CD4-positive, alpha-beta memory T cell (primary cell): ENCODE measurements at regions of chr9 and their contacts with region 1.

Region 1: GRCh38 chr9:92764988-92765936 is 629 bp upstream of the BICD2 start:
- DNase-seq: peak; percentile 97 to 99 (median 99)
- H3K4me3 ChIP-seq: peak overlapping the region; percentile 2 to 80
- H3K4me3 Mint-ChIP-seq: peak overlapping the region; percentile 89 to 95 (median 90)
- H3K27ac ChIP-seq: peak overlapping the region; percentile 95
- H3K27ac Mint-ChIP-seq: peak overlapping the region; percentile 94 to 98 (median 96)
- H3K4me1 ChIP-seq: peaks cover 54% of the 10 kb centered on the region
- H3K4me1 Mint-ChIP-seq: peaks cover 43 to 66% (median 49%) of the 10 kb centered on the region in 4 donors
- H3K27me3 ChIP-seq: no peaks in the 10 kb centered on the region
- H3K27me3 Mint-ChIP-seq: no peaks in the 10 kb centered on the region

Region 2: GRCh38 chr9:92293452-92294296 is 471.6 kb before region 1 on chr9 and contains the start of gene IARS1:
- CTCF ChIA-PET with region 1: no interaction called
- POLR2A ChIA-PET with region 1: no interaction called
- intact Hi-C with region 1: loop called (anchors 10 kb)
- DNase-seq: peak; percentile 98 to 100 (median 99)
- H3K4me3 ChIP-seq: peak within 1 kb of the TSS; percentile 66 to 77
- H3K4me3 Mint-ChIP-seq: peak within 1 kb of the TSS; percentile 97 to 100 (median 98)
- H3K27ac ChIP-seq: peak within 1 kb of the TSS; percentile 66
- H3K27ac Mint-ChIP-seq: peak within 1 kb of the TSS; percentile 98 to 99 (median 99)
- H3K4me1 ChIP-seq: peaks cover 49% of the 10 kb centered on the region
- H3K4me1 Mint-ChIP-seq: peaks cover 33 to 84% (median 61%) of the 10 kb centered on the region in 4 donors
- H3K27me3 ChIP-seq: no peaks in the 10 kb centered on the region
- H3K27me3 Mint-ChIP-seq: no peaks in the 10 kb centered on the region
- total RNA-seq, gene IARS1: 109 to 112 TPM

Region 3: GRCh38 chr9:92669890-92670708 is 95.2 kb before region 1 on chr9 and contains the start of gene IPPK:
- CTCF ChIA-PET with region 1: interaction called, 8 read pairs
- POLR2A ChIA-PET with region 1: interaction called, 36 read pairs
- intact Hi-C with region 1: loop called (anchors 1 kb)
- DNase-seq: peak; percentile 95 to 98 (median 97)
- H3K4me3 ChIP-seq: peak within 1 kb of the TSS; percentile 89 to 90
- H3K4me3 Mint-ChIP-seq: peak within 1 kb of the TSS; percentile 94 to 99 (median 96)
- H3K27ac ChIP-seq: peak within 1 kb of the TSS; percentile 97
- H3K27ac Mint-ChIP-seq: peak within 1 kb of the TSS; percentile 97 to 99 (median 98)
- H3K4me1 ChIP-seq: peaks cover 29% of the 10 kb centered on the region
- H3K4me1 Mint-ChIP-seq: peaks cover 24 to 45% (median 35%) of the 10 kb centered on the region in 4 donors
- H3K27me3 ChIP-seq: no peaks in the 10 kb centered on the region
- H3K27me3 Mint-ChIP-seq: no peaks in the 10 kb centered on the region
- total RNA-seq, gene IPPK: 7.2 to 7.9 TPM

Region 4: DNA sequence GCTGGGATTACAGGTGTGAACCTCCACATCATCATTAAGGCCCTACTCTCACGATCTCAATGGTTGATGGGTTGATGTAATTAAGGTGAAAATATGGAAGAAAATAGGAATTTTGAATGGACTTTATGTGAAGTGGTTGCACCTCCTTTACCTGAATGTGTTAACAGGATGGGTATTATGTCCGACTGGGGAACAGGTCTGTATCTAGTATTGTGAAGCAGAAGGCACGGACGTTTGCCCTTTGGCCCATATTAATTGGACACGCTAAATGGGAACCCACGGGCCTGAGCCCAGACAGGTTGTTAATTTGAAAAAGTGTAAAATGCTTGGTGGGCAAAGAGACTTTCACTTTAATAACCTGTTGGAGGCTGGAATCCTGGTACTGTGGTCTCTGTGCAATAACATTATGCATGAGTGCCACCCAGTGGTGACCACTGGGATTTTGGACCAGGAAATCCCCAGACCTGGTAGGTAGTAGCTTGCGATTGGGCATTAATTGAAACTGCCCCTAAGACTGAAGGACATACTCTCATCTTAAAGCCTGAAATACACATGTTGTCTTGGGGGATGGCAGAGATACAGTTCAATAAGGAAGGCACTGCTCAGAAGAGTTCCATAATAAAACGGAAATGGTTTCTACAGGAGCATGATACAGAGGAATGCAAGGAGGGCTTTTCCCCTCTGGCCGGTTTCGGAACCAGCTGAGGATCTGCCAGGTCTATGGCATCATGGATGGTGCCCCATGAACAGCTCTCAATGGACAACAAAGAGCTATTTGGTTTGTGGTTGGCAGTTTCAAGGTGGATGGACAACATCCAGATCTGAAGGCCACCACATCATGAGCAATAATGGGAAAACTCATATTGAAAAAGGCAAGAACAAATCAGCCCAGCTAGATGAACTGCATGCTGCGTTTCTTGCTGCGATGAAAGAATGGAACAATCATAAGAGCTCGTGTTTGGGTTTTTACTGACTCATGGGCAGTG is 25.6 kb after region 1 on chr9:
- CTCF ChIA-PET with region 1: interaction called, 23 read pairs
- POLR2A ChIA-PET with region 1: interaction called, 3 read pairs
- intact Hi-C with region 1: loop called (anchors 1 kb)
- DNase-seq: peak; percentile 69 to 75 (median 72)
- H3K4me3 ChIP-seq: no peak overlapping the region
- H3K4me3 Mint-ChIP-seq: peak overlapping the region in 2 of 8 donors; percentile 35 to 40
- H3K27ac ChIP-seq: no peak overlapping the region
- H3K27ac Mint-ChIP-seq: peak overlapping the region in 4 of 7 donors; percentile 1 to 77 (median 48)
- H3K4me1 ChIP-seq: no peaks in the 10 kb centered on the region
- H3K4me1 Mint-ChIP-seq: peaks cover 3 to 9% (median 5%) of the 10 kb centered on the region in 4 donors
- H3K27me3 ChIP-seq: no peaks in the 10 kb centered on the region
- H3K27me3 Mint-ChIP-seq: peaks cover 4 to 5% of the 10 kb centered on the region in 2 donors

Region 5: DNA sequence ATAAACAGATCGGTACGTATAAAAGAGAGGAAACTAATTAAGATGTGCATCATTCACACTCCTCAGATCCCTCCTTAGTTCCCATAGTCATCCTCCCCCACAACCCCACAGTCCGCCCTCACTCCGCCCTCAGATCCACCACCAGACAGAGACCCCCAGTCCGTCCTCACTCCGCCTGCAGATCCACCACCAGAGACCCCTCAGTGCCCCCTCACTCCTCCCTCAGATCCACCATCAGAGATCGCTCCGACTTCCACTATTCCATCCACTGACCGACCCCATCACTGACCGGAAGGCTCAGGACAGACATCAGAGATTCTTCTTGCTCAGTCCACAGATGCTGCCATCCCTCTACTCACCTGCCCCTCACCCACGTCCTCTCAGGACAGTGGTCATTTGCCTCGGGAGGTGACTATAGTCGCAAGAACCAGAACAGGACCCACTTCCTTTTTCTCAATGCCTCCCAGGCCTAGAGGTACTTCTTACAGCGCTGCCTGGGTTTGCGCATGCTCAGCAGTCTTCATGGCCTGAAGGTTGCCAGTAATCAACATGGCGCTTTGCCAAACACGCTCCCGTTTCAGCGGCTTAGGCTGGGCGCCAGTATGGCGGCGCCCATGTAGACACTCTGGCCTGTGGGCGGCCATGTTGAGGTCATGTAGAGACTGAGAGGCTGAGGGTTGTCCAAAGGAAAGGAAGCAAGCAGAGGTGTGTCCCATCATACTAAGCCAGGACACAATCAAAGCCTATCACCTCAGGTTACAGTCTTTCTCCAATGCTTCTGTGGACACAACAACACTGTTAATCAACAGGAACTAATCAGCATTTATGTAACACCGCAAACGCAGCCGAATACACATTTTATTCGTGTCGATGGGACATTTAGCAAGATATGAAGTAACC is 112.5 kb after region 1 on chr9 and contains the start of gene ZNF484:
- CTCF ChIA-PET with region 1: no interaction called
- POLR2A ChIA-PET with region 1: no interaction called
- intact Hi-C with region 1: loop called (anchors 1 kb)
- DNase-seq: peak; percentile 94 to 97 (median 95)
- H3K4me3 ChIP-seq: peak within 1 kb of the TSS; percentile 81 to 97
- H3K4me3 Mint-ChIP-seq: peak within 1 kb of the TSS; percentile 87 to 100 (median 99)
- H3K27ac ChIP-seq: peak within 1 kb of the TSS; percentile 94
- H3K27ac Mint-ChIP-seq: peak within 1 kb of the TSS; percentile 96 to 100 (median 99)
- H3K4me1 ChIP-seq: peaks cover 35% of the 10 kb centered on the region
- H3K4me1 Mint-ChIP-seq: peaks cover 30 to 48% (median 40%) of the 10 kb centered on the region in 4 donors
- H3K27me3 ChIP-seq: no peaks in the 10 kb centered on the region
- H3K27me3 Mint-ChIP-seq: no peaks in the 10 kb centered on the region
- total RNA-seq, gene ZNF484: 22.6 to 24.7 TPM

Region 6: GRCh38 chr9:92947268-92948047 is 182.2 kb after region 1 on chr9 and contains the start of gene FGD3:
- CTCF ChIA-PET with region 1: no interaction called
- POLR2A ChIA-PET with region 1: no interaction called
- intact Hi-C with region 1: no loop called
- DNase-seq: peak; percentile 40 to 54 (median 49)
- H3K4me3 ChIP-seq: peak within 1 kb of the TSS; percentile 60 to 64
- H3K4me3 Mint-ChIP-seq: peak within 1 kb of the TSS; percentile 97 to 99 (median 98)
- H3K27ac ChIP-seq: peak within 1 kb of the TSS; percentile 57
- H3K27ac Mint-ChIP-seq: peak within 1 kb of the TSS; percentile 78 to 97 (median 92)
- H3K4me1 ChIP-seq: peaks cover 56% of the 10 kb centered on the region
- H3K4me1 Mint-ChIP-seq: peaks cover 40 to 66% (median 55%) of the 10 kb centered on the region in 4 donors
- H3K27me3 ChIP-seq: no peaks in the 10 kb centered on the region
- H3K27me3 Mint-ChIP-seq: no peaks in the 10 kb centered on the region
- total RNA-seq, gene FGD3: 256 to 272 TPM

Region 7: DNA sequence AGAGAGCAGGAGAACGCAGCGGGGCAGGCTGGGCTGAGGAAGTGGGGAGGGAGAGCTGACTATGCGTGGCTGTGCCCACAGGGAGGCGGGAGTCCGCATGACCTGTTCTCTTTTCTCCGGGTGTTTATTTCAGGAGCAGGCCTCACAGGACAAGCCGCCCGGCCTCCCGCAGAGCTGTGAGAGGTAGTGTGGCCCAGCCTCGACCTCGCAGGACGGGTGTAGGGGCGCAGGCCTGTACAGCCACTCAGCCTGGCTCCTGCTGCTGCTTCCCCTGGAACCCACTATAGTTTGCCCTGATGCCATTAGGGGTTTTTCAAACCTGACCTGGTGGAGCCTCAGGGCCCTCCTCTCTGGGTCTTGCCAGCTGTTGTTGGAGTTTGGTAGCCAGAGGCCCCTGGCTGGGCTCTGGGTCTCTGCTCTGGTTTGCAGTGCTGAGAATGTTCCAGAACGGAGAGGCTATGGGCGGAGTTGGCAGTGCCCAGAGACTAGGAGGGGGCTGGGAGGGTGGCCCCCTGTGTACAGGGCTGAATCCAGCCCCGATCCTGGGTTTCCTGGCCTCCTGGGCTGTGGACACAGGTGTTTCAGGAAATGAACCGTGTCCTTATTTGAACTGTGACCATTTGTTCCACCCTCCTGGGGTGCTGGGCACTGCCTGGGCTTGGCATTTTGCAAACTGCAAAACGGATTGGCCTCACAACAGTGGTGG is 497.4 kb after region 1 on chr9:
- CTCF ChIA-PET with region 1: no interaction called
- POLR2A ChIA-PET with region 1: no interaction called
- intact Hi-C with region 1: no loop called
- DNase-seq: no peak
- H3K4me3 ChIP-seq: no peak overlapping the region
- H3K4me3 Mint-ChIP-seq: no peak overlapping the region
- H3K27ac ChIP-seq: no peak overlapping the region
- H3K27ac Mint-ChIP-seq: no peak overlapping the region
- H3K4me1 ChIP-seq: no peaks in the 10 kb centered on the region
- H3K4me1 Mint-ChIP-seq: peaks cover 0 to 2% (median 2%) of the 10 kb centered on the region in 4 donors
- H3K27me3 ChIP-seq: no peaks in the 10 kb centered on the region
- H3K27me3 Mint-ChIP-seq: peaks cover 2 to 5% of the 10 kb centered on the region in 2 donors

Region 8: DNA sequence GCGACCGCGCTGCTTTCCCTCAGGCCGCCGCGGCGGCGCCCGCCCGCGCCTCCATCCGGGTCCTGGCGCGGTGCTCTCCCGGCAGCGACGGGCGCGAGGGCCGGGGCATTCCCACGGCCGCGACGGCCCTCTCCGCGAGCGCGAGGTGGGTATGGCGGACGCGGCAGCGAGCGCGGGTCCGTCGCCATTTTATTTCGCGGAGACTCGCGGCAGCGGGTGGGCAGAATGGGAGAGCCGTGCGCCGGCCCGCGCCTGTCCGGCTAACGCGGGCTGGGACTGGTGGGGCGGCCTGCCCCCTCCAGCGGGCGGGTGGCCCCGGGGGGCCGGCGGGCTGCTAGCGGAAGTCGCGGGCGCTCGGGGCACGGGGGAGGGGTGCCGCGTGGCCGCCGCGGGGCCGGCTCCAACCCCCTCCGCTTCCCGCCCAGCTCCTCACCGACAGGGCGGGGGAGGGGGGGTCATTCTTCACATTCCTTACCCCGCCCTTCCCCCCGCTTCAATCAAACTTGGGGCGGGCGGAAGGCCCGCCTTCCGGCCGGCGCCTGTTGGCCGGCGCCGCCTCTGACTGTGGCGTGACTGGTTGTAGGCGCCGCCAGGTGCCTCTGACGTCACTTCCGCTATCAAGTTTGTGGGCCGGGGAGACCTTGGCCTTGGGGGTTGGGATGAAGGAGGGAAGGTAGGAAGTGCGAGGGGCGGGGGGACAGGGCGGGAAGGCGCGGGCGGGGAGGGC is 1401.1 kb after region 1 on chr9:
- CTCF ChIA-PET with region 1: no interaction called
- POLR2A ChIA-PET with region 1: no interaction called
- intact Hi-C with region 1: loop called (anchors 10 kb)
- DNase-seq: peak; percentile 93 to 96 (median 94)
- H3K4me3 ChIP-seq: peak overlapping the region in 1 of 2 donors; percentile 80
- H3K4me3 Mint-ChIP-seq: peak overlapping the region; percentile 79 to 98 (median 90)
- H3K27ac ChIP-seq: peak overlapping the region; percentile 98
- H3K27ac Mint-ChIP-seq: peak overlapping the region; percentile 90 to 96 (median 95)
- H3K4me1 ChIP-seq: peaks cover 48% of the 10 kb centered on the region
- H3K4me1 Mint-ChIP-seq: peaks cover 34 to 64% (median 45%) of the 10 kb centered on the region in 4 donors
- H3K27me3 ChIP-seq: no peaks in the 10 kb centered on the region
- H3K27me3 Mint-ChIP-seq: no peaks in the 10 kb centered on the region